GM12878 (cell line): ENCODE measurements at regions of chr15 and their contacts with region 1.

Region 1: DNA sequence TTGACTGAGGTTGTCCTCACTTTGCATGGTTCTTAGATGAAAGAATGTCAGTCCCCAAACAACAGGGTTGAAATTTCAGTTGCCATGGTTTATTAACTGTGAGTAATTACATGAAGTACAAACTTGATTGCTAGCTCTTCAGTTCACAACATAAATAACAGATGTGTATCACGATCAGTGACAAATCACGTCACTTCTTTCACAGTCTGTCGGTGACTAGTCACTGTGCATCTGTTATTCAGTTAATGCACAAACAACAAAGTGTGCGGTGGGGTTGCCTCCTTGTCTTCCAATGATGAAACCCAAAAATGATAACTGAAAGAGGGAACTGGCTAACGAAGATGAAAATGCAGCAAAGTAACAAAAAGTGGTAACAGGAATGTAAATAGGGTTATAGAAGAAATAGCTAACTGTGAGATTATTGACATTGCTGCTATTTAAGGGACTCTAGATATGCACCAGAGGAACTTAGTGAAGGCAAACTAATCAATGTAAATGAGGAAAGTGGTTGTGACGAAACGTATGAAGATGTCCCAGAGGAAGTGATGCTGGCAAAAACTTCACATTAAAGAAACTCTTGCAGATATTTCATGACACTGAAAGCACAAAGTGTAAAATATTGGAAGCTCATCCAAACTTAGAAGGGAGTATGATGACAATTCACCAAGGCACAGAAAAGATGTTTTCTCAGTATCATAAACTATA is 159.3 kb downstream of the WDR76 start:
- DNase-seq: no peak
- ATAC-seq: no peak
- H3K4me3 ChIP-seq: no peak overlapping the region
- H3K27ac ChIP-seq: no peak overlapping the region
- H3K4me1 ChIP-seq: peaks cover 5% of the 10 kb centered on the region; the same call in 1 of the 2 replicates
- H3K27me3 ChIP-seq: no peaks in the 10 kb centered on the region
- CTCF ChIP-seq: no peak
- EP300 ChIP-seq: no peak
- POLR2A ChIP-seq: no peak
- RAD21 ChIP-seq: no peak

Region 2: DNA sequence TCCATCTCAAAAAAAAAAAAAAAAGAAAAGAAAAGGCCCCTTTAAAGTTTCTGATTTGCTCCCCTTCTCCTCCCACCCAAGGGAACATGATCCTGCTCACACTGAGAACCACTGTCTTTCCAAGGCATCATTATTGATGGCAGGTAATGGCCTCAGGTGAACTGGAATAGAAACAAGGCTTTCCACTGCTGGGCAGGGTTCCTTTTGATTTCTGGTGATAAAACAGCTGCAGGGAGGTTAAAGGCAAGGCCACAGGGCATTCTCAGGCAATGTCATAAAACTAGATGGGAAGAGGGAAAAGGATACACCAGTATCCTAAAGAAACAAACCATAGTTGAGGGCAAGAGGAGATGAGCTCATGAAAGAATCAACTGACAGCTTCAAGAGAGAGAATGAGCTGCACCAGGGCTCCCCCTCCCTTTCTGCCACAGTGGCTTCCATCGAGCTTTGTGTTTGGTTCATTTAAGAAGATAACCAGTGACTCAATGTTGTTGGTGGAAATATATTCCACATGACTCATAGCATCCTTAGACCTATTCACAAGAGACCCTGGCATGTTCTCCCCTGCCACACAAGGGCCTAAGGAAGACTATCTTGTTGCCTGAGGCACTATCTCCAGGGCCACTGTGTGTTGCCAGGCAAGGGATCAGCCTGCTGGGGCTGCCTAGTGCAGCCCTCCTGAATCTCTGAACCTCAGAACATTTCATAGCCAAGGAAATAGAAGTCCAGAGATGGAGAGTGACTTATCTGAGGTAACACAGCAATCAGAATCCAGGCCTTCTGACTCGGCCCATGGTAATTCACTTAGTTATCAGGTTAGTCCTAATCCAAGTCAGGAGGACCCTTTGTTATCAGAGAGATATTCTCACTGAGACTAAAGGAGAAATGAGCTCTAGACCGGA is 72.9 kb before region 1 on chr15:
- CTCF ChIA-PET with region 1: no interaction called
- POLR2A ChIA-PET with region 1: no interaction called
- RAD21 ChIA-PET with region 1: no interaction called
- SMC1A ChIA-PET with region 1: no interaction called
- in situ Hi-C with region 1: loop called (anchors 5 kb)
- intact Hi-C with region 1: no loop called
- DNase-seq: no peak
- ATAC-seq: no peak
- H3K4me3 ChIP-seq: no peak overlapping the region
- H3K27ac ChIP-seq: no peak overlapping the region
- H3K4me1 ChIP-seq: no peaks in the 10 kb centered on the region
- H3K27me3 ChIP-seq: no peaks in the 10 kb centered on the region
- CTCF ChIP-seq: no peak
- EP300 ChIP-seq: no peak
- POLR2A ChIP-seq: no peak
- RAD21 ChIP-seq: no peak

Region 3: DNA sequence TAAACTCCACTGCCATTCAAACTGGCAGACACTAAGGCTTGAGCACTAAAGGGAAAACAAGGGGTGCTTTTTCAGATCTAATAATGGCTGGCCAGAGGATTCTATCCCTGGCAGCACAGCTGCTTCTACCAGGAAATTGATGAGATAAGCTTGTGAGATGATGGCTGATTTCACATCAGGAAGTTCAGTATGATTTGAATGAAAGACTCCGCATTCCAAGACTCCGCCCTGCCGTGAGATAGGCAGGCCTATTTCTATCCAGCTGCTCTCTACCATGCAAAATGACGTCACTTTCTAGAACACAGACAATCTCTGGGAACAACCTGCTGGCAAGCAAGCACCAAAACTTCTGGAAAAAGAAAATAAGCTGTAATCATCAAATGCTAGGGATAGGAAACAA is 12.5 kb after region 1 on chr15:
- CTCF ChIA-PET with region 1: no interaction called
- POLR2A ChIA-PET with region 1: no interaction called
- RAD21 ChIA-PET with region 1: no interaction called
- SMC1A ChIA-PET with region 1: no interaction called
- in situ Hi-C with region 1: no loop called
- intact Hi-C with region 1: no loop called
- DNase-seq: no peak
- ATAC-seq: no peak
- H3K4me3 ChIP-seq: no peak overlapping the region
- H3K27ac ChIP-seq: no peak overlapping the region
- H3K4me1 ChIP-seq: no peaks in the 10 kb centered on the region
- H3K27me3 ChIP-seq: no peaks in the 10 kb centered on the region
- CTCF ChIP-seq: no peak
- EP300 ChIP-seq: no peak
- POLR2A ChIP-seq: no peak
- RAD21 ChIP-seq: no peak